ENCODE measurements at regions of chr18 and their contacts with region 1.

Region 1: DNA sequence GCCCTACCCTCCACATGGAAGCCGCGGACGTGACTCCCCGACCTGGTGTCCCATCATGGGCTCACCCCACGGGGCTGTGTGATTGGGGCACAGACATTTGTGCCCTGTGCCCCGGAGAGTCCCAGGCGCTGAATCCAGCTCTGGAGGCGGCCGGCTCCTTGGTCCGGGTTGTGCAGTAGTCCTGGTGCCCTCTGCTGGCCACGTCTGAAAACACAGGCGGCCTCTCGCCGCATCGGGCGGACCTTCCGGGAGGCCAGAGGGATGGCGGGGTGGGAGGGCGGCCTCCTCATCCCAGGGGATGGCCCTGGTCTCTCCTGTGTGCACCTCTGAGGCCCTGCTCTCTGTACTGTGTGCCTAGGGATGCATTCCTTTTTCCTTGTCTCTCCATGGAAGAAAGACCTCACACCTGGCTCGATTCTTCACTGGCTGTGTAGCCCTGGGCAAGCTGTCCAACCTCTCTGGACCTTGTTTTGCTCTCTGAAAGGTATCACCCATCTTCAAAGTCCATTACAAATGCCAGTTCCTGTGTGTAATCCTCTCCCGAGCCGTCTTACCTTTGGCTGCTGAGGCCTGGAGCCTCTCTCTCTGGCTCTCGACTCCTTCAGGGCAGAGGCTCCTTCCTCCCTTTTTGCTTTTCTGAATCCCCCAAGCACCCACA is 27.6 kb downstream of the CELF4 start:
- DNase-seq: peak; percentile 72 to 80
- ATAC-seq: peak; percentile 56 to 92 (median 84)
- H3K4me3 ChIP-seq: no peak overlapping the region
- H3K27ac ChIP-seq: no peak overlapping the region
- H3K4me1 ChIP-seq: peaks cover 0 to 12% (median 0%) of the 10 kb centered on the region in 9 donors
- H3K27me3 ChIP-seq: peaks cover 0 to 66% (median 57%) of the 10 kb centered on the region in 7 donors
- CTCF ChIP-seq: peak; percentile 76 to 93 (median 86)

Region 2: GRCh38 chr18:37341016-37341415 is 197.0 kb before region 1 on chr18:
- intact Hi-C with region 1: loop called in 6 of 10 experiments (anchors 5 kb)
- DNase-seq: no peak
- ATAC-seq: no peak
- H3K4me3 ChIP-seq: no peak overlapping the region
- H3K27ac ChIP-seq: no peak overlapping the region
- H3K4me1 ChIP-seq: no peaks in the 10 kb centered on the region
- H3K27me3 ChIP-seq: peaks cover 0 to 44% (median 27%) of the 10 kb centered on the region in 7 donors
- CTCF ChIP-seq: no peak

Region 3: DNA sequence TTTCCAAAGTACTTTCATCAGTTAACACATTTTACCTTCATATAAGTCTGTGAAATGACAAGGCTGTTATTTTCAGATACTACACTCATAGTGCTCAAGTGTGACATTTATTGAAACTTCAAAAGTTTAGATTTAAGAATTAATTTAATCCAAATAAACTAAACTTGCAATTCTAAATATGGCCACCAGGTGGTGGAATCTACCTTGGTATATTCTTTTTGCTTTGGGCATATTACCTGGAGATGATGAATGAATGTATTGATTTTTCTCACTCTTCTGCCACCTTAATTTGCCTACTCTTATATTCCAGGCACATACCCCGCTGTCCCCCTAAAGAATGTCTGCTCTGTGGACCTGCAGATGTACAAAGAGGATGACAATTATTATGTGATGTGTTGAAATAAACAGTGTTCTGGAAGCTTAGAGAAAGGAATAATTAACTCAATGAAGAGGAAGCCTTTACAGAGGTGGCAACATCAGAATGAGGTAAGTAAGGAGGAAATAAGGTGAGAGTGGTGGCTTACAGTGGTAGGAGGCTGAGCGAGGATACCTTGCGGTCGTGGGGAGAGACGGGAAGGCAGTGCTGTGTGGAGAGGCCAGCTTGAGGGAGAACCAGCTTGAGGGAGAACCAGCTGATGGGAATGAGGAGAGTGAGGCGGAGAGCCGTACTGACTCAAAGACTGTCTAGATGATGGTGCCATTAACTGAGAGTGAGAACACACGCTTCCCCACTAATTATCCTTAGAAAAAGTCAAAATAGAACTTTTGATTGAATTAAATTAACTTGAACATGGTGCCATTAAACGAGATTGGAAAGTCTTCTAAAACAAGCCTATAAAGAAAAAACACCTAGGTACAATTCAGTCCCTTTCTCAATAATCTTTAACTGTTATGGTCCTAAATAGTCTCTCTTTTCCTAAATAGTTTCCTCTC is 151.9 kb before region 1 on chr18:
- intact Hi-C with region 1: loop called (anchors 1 to 5 kb)
- DNase-seq: no peak
- ATAC-seq: no peak
- H3K4me3 ChIP-seq: no peak overlapping the region
- H3K27ac ChIP-seq: no peak overlapping the region
- H3K4me1 ChIP-seq: no peaks in the 10 kb centered on the region
- H3K27me3 ChIP-seq: peaks cover 0 to 30% (median 14%) of the 10 kb centered on the region in 7 donors
- CTCF ChIP-seq: peak; percentile 66 to 89 (median 75)

Region 4: GRCh38 chr18:37440206-37440605 is 97.8 kb before region 1 on chr18:
- intact Hi-C with region 1: loop called in 9 of 10 experiments (anchors 2 to 10 kb)
- DNase-seq: peak; percentile 13 to 25
- ATAC-seq: peak in 4 of 8 donors; percentile 23 to 57 (median 45)
- H3K4me3 ChIP-seq: no peak overlapping the region
- H3K27ac ChIP-seq: no peak overlapping the region
- H3K4me1 ChIP-seq: peaks cover 0 to 16% (median 0%) of the 10 kb centered on the region in 9 donors
- H3K27me3 ChIP-seq: peaks cover 0 to 14% (median 0%) of the 10 kb centered on the region in 7 donors
- CTCF ChIP-seq: no peak

Region 5: DNA sequence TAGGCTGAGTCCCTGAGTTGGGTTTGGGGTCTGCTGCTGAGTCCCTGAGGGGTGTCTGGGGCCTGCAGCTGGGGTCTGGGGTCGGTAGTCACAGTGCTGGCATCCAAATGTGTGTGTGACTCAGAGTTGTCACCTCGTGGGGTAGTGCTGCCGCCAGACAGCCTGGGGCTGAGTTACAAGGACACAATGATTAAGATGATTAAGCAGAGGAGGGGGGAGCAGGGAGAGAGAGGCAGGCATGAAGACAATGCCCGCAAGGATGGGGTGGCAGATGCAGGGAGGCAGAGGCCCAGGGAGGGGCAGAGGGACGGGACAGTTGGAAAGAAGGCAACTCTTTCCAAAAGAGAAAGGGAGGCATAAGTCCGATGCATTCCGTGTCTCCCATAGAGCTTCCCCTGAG is 92.6 kb before region 1 on chr18:
- intact Hi-C with region 1: loop called in 9 of 10 experiments (anchors 2 to 10 kb)
- DNase-seq: no peak
- ATAC-seq: no peak
- H3K4me3 ChIP-seq: no peak overlapping the region
- H3K27ac ChIP-seq: no peak overlapping the region
- H3K4me1 ChIP-seq: peaks cover 0 to 1% (median 0%) of the 10 kb centered on the region in 9 donors
- H3K27me3 ChIP-seq: peaks cover 0 to 35% (median 0%) of the 10 kb centered on the region in 7 donors
- CTCF ChIP-seq: no peak

Region 6: GRCh38 chr18:37465958-37466357 is 72.0 kb before region 1 on chr18:
- intact Hi-C with region 1: no loop called
- DNase-seq: no peak
- ATAC-seq: peak in 3 of 8 donors; percentile 26 to 39 (median 38)
- H3K4me3 ChIP-seq: no peak overlapping the region
- H3K27ac ChIP-seq: no peak overlapping the region
- H3K4me1 ChIP-seq: peaks cover 0 to 4% (median 0%) of the 10 kb centered on the region in 9 donors
- H3K27me3 ChIP-seq: peaks cover 0 to 22% (median 6%) of the 10 kb centered on the region in 7 donors
- CTCF ChIP-seq: no peak

Region 7: GRCh38 chr18:37484983-37485834 is 52.8 kb before region 1 on chr18:
- intact Hi-C with region 1: loop called in 1 of 10 experiments (anchors 10 kb)
- DNase-seq: no peak
- ATAC-seq: peak in 1 of 8 donors; percentile 57
- H3K4me3 ChIP-seq: peak overlapping the region in 3 of 10 donors; percentile 14 to 28 (median 18)
- H3K27ac ChIP-seq: no peak overlapping the region
- H3K4me1 ChIP-seq: peaks cover 0 to 7% (median 0%) of the 10 kb centered on the region in 9 donors
- H3K27me3 ChIP-seq: peaks cover 7 to 76% (median 70%) of the 10 kb centered on the region in 7 donors
- CTCF ChIP-seq: peak in 6 of 9 donors; percentile 14 to 41 (median 32)

Region 8: DNA sequence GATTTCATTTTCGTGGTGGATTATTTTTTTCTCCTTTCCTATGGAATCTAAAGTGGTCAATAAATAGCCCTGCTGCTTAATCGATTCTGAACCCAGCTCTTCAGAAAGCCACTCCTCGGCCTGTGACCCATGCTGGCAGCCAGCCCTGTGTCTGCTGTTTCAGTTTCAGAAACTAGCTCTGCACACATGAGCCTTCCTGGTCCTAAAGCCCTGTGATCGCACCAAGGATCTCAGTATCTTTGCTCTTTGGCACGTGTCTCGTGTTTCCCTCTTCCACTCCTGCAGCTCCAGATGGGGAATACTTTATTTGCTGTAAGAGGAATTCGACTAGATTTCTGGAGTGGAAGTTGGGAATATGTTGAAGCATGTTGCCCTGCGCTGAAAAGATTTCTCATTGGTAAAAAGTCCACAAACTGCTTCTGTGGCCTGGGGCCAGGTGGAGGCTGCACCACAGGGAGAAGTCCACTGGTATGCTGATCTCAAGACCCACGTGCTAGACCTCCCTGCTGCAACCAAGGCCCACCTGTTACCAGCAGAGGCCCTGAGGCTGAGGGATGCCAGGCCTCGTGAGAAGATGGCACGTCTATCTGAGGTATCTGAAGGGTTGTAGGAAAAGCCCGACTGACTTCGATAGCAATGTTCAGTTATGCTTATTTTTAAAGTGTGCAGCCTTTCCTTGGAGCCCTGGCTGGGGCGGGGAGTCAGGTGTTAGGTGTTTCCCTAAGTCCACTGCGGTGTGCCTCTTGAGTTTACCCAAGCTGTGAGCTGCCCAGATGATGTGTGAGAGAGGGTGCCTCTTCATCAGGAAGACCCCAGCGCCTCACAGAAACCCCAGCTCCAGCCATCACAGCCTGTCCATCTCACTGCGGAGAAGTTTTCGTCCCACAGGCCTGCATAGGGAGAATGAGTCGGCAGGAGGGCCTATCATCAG is 61.2 kb after region 1 on chr18:
- intact Hi-C with region 1: no loop called
- DNase-seq: no peak
- ATAC-seq: no peak
- H3K4me3 ChIP-seq: no peak overlapping the region
- H3K27ac ChIP-seq: no peak overlapping the region
- H3K4me1 ChIP-seq: no peaks in the 10 kb centered on the region
- H3K27me3 ChIP-seq: peaks cover 0 to 5% (median 0%) of the 10 kb centered on the region in 7 donors
- CTCF ChIP-seq: no peak

Measured in heart right ventricle (tissue), 16 donors.